Activated CD8-positive, alpha-beta T cell treated with anti-CD3 and anti-CD28 coated beads for 36 hours (primary cell): ENCODE measurements at regions of chr12 and their contacts with region 1.

Region 1: GRCh38 chr12:13255792-13256691 is 59.5 kb downstream of the EMP1 start:
- DNase-seq: peak; percentile 85
- ATAC-seq: peak; percentile 100
- H3K4me3 Mint-ChIP-seq: no peak overlapping the region
- H3K27ac Mint-ChIP-seq: no peak overlapping the region
- H3K4me1 Mint-ChIP-seq: peaks cover 3% of the 10 kb centered on the region
- H3K27me3 Mint-ChIP-seq: peaks cover 1% of the 10 kb centered on the region
- CTCF ChIP-seq: peak; percentile 95

Region 2: DNA sequence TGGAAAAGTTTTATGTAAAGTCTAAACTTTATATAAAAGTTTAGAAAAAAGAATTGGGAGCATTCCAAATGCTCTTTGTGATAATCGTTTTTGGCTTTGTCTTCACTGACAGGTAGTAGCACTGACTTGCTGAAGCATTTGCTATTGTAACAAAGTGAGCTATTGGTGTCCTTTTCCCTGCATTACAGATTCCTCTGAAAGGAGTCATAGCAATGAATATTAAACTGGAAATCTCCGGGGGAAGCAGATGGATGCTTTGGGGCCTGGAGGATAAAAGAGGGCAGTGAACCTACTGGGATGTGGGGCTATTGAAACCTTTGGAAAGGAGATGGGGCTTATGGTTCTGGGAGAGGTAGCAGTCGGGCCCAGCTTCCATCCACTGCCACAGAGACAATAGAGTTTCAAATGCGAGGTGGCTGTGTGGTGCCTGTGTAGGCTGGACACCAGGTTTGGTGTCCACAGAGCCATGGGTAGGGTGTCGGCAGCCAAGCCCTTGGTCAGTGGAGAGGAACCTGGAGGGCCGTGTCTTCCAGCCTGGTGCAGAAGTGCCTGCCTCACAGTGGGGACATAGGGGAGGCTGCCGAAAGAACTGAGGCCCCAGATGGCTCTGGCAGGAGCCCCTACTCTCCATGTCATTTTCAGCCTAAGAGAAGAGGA is 162.7 kb before region 1 on chr12:
- CTCF ChIA-PET with region 1: no interaction called
- POLR2A ChIA-PET with region 1: no interaction called
- intact Hi-C with region 1: no loop called
- DNase-seq: no peak
- ATAC-seq: no peak
- H3K4me3 Mint-ChIP-seq: no peak overlapping the region
- H3K27ac Mint-ChIP-seq: no peak overlapping the region
- H3K4me1 Mint-ChIP-seq: peaks cover 17% of the 10 kb centered on the region
- H3K27me3 Mint-ChIP-seq: no peaks in the 10 kb centered on the region
- CTCF ChIP-seq: no peak

Region 3: GRCh38 chr12:13196130-13196921 is 59.7 kb before region 1 on chr12 and contains the start of gene EMP1:
- CTCF ChIA-PET with region 1: no interaction called
- POLR2A ChIA-PET with region 1: no interaction called
- intact Hi-C with region 1: no loop called
- DNase-seq: peak; percentile 93
- ATAC-seq: peak; percentile 98
- H3K4me3 Mint-ChIP-seq: peak within 1 kb of the TSS; percentile 80
- H3K27ac Mint-ChIP-seq: peak within 1 kb of the TSS; percentile 83
- H3K4me1 Mint-ChIP-seq: peaks cover 27% of the 10 kb centered on the region
- H3K27me3 Mint-ChIP-seq: peaks cover 7% of the 10 kb centered on the region
- CTCF ChIP-seq: no peak
- total RNA-seq, gene EMP1: 3.1 to 3.6 TPM

Region 4: DNA sequence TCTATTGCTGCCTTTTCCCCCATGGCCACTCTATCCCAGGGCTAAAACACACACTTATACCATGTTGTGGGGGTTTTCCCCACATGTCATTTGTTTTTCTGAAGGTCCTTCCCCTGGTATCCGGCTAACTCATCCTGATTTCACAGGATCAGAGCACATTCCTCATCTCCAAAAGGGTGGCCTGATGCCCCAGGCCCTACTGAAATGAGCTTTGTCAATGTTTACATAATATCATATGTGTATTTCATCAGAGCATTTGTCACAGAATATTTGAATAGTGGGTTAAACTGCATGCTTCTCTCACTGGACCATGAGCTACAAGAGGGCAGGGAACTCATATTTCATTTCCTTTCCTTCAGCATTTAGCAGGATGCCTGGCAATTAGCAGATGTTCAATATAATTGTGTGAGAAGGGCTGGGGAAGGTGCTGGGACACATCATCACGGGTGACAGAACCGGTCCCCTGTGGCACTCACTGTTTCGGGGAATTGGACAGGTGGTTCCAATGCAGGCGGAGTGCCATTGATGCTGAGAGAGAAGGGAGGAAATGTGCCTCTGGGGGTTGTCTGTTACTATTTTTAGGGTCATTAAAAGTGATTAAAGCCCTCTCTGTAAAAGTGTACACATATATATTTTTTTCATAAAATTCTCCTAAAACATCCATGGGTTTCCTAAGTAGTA is 32.7 kb before region 1 on chr12:
- CTCF ChIA-PET with region 1: interaction called, 15 read pairs
- POLR2A ChIA-PET with region 1: no interaction called
- intact Hi-C with region 1: no loop called
- DNase-seq: no peak
- ATAC-seq: no peak
- H3K4me3 Mint-ChIP-seq: no peak overlapping the region
- H3K27ac Mint-ChIP-seq: no peak overlapping the region
- H3K4me1 Mint-ChIP-seq: no peaks in the 10 kb centered on the region
- H3K27me3 Mint-ChIP-seq: peaks cover 16% of the 10 kb centered on the region
- CTCF ChIP-seq: no peak

Region 5: GRCh38 chr12:13270817-13271216 is 14.8 kb after region 1 on chr12:
- CTCF ChIA-PET with region 1: interaction called, 18 read pairs
- POLR2A ChIA-PET with region 1: no interaction called
- intact Hi-C with region 1: no loop called
- DNase-seq: no peak
- ATAC-seq: no peak
- H3K4me3 Mint-ChIP-seq: no peak overlapping the region
- H3K27ac Mint-ChIP-seq: no peak overlapping the region
- H3K4me1 Mint-ChIP-seq: no peaks in the 10 kb centered on the region
- H3K27me3 Mint-ChIP-seq: peaks cover 22% of the 10 kb centered on the region
- CTCF ChIP-seq: no peak

Region 6: DNA sequence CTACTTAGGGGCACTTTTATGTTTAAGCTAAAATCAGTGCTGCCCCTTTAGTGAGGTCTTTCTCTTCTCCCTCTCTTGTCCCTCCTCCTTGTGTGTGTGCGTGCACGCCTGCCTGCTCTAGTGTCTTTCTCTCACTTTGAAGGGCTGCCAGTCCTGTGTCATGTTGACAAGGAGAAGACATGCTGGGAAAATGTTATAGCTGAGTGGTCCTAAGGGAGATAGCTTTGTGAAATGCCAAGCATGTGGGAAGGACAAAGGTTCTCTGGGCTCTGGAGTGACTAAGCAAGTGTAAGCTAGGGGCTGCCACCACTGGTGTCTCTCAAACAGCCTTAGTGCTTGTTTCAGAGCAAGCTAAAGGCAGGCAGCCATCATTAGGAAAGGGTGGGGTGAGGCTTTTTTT is 48.9 kb after region 1 on chr12:
- CTCF ChIA-PET with region 1: interaction called, 14 read pairs
- POLR2A ChIA-PET with region 1: no interaction called
- intact Hi-C with region 1: no loop called
- DNase-seq: no peak
- ATAC-seq: no peak
- H3K4me3 Mint-ChIP-seq: no peak overlapping the region
- H3K27ac Mint-ChIP-seq: no peak overlapping the region
- H3K4me1 Mint-ChIP-seq: no peaks in the 10 kb centered on the region
- H3K27me3 Mint-ChIP-seq: peaks cover 22% of the 10 kb centered on the region
- CTCF ChIP-seq: no peak

Region 7: DNA sequence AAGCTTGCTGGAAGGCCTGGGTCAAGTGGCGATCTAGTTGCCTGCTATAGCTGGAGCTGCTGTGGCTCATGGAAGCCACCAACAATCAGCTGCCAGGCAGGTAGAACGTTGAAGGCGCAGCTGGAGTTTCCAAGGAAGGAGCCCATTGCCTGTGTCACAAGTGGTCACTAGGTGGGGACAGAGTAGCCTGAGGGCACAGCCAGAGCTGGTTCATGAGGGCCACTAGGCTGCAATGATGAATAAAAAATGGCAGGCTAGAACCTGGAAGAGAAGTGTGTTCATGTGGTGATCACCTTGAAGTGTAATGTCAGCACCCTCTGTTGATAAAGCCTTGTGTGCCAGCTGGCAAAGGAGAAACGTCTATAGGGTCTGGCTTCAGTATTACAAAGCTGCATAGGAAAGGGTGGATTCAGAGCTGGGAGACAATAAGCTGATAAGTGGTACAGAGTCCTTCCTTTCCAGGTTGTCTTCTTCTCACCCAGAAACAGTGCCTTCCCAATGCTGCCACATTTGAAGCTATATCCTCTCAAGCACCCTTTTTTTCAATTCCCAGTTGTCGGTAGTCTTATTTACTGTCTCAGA is 106.3 kb after region 1 on chr12:
- CTCF ChIA-PET with region 1: interaction called, 13 read pairs
- POLR2A ChIA-PET with region 1: no interaction called
- intact Hi-C with region 1: no loop called
- DNase-seq: peak; percentile 74
- ATAC-seq: peak; percentile 90
- H3K4me3 Mint-ChIP-seq: no peak overlapping the region
- H3K27ac Mint-ChIP-seq: no peak overlapping the region
- H3K4me1 Mint-ChIP-seq: no peaks in the 10 kb centered on the region
- H3K27me3 Mint-ChIP-seq: peaks cover 14% of the 10 kb centered on the region
- CTCF ChIP-seq: peak; percentile 76